ENCODE measurements at regions of chr12 and their contacts with region 1.

Region 1: DNA sequence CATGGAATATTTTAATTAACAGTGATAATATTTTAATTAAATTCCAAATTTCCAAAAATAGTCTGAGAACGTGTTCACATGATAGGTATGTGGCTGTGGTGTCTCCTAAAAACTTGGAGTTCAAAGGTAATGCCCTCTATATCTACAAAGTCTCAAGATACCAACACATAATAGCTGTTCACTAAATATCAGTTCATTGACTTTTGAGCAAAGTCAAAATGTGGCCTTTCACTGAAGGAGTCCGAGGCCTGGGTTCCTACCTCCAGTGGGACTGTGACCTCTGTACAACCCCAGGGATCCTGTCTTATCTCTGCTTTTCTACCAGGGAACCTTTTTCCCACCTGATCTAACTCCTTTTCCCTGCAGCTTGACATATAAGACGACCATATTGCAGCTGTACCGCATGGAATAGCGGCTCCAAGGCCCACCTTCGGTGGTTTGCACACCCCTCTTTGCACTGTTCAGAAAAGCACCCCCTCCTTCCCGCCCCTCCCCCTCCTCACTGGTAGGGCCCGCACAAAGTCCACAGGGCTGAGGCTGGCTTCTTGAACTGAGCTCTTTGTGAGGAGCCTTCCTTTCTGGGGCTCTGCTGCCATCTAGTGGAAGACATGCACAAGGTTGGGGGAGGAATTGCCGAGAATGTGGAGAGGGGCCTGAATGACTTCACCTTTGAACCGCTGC is 3.1 kb downstream of the CCND2 start:
- DNase-seq: peak; percentile 93
- ATAC-seq: peak; percentile 39
- H3K4me3 Mint-ChIP-seq: peak overlapping the region; percentile 95
- H3K27ac Mint-ChIP-seq: peak overlapping the region; percentile 99
- H3K4me1 Mint-ChIP-seq: peaks cover 62% of the 10 kb centered on the region
- H3K27me3 Mint-ChIP-seq: no peaks in the 10 kb centered on the region

Region 2: GRCh38 chr12:3885277-3886094 is 391.2 kb before region 1 on chr12:
- CTCF ChIA-PET with region 1: interaction called, 109 read pairs
- POLR2A ChIA-PET with region 1: interaction called, 12 read pairs
- intact Hi-C with region 1: loop called (anchors 1 kb)
- DNase-seq: peak; percentile 47
- ATAC-seq: peak; percentile 27
- H3K4me3 Mint-ChIP-seq: no peak overlapping the region
- H3K27ac Mint-ChIP-seq: peak overlapping the region; percentile 58
- H3K4me1 Mint-ChIP-seq: peaks cover 7% of the 10 kb centered on the region
- H3K27me3 Mint-ChIP-seq: no peaks in the 10 kb centered on the region

Region 3: DNA sequence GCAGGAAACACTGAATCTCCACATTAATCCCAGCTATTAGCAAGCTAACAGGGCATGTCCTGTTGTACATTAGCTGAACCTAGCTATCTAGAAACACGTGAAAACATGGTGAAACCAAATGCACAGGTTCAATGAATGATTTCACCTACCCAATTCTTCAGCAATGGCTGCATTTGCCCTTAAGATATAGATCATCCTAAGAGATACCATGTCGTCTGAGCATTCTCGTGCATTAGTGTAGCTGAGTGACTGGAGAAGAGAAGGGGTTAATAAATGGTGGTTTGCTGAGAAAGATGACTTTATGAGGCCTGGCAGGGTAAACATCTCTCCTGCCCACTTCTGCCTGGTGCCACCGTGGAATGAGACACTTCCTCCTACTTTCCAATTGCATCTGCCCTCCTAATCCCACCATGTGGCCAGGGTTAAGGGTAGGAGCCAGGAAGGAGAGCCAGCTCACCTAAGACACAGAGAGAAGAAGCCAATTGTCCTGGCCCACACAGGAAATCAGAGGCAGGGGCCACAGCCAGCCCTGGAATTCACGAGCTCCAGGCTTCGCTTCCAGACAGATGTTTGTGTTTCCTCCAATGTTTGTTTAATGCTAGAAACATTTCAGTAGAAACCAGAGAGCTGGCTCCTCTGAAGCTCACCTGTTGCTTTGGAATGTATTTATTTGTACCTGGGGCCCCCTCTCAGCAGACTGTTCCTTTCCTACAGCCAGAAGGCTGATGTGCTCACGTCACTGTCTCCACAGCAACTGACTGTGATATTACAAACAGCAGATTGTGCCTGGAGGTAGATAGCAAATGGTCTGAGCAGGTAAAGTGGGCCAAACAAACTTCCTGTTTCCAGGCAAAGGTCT is 277.5 kb before region 1 on chr12:
- CTCF ChIA-PET with region 1: interaction called, 37 read pairs
- POLR2A ChIA-PET with region 1: interaction called, 3 read pairs
- intact Hi-C with region 1: loop called (anchors 1 kb)
- DNase-seq: no peak
- ATAC-seq: no peak
- H3K4me3 Mint-ChIP-seq: no peak overlapping the region
- H3K27ac Mint-ChIP-seq: no peak overlapping the region
- H3K4me1 Mint-ChIP-seq: peaks cover 16% of the 10 kb centered on the region
- H3K27me3 Mint-ChIP-seq: no peaks in the 10 kb centered on the region

Region 4: GRCh38 chr12:4112734-4113325 is 163.8 kb before region 1 on chr12:
- CTCF ChIA-PET with region 1: interaction called, 51 read pairs
- POLR2A ChIA-PET with region 1: interaction called, 11 read pairs
- intact Hi-C with region 1: loop called in 1 of 2 experiments (anchors 2 kb)
- DNase-seq: no peak
- ATAC-seq: peak; percentile 35
- H3K4me3 Mint-ChIP-seq: no peak overlapping the region
- H3K27ac Mint-ChIP-seq: no peak overlapping the region
- H3K4me1 Mint-ChIP-seq: peaks cover 59% of the 10 kb centered on the region
- H3K27me3 Mint-ChIP-seq: peaks cover 11% of the 10 kb centered on the region

Region 5: GRCh38 chr12:4164559-4165558 is 111.8 kb before region 1 on chr12:
- CTCF ChIA-PET with region 1: interaction called, 14 read pairs
- POLR2A ChIA-PET with region 1: interaction called, 7 read pairs
- intact Hi-C with region 1: no loop called
- DNase-seq: peak; percentile 82
- ATAC-seq: peak; percentile 85
- H3K4me3 Mint-ChIP-seq: peak overlapping the region; percentile 75
- H3K27ac Mint-ChIP-seq: peak overlapping the region; percentile 88
- H3K4me1 Mint-ChIP-seq: peaks cover 50% of the 10 kb centered on the region
- H3K27me3 Mint-ChIP-seq: no peaks in the 10 kb centered on the region

Region 6: GRCh38 chr12:4287325-4288211 is 10.9 kb after region 1 on chr12:
- CTCF ChIA-PET with region 1: interaction called, 15 read pairs
- POLR2A ChIA-PET with region 1: interaction called, 6 read pairs
- intact Hi-C with region 1: no loop called
- DNase-seq: no peak
- ATAC-seq: peak; percentile 73
- H3K4me3 Mint-ChIP-seq: peak overlapping the region; percentile 30
- H3K27ac Mint-ChIP-seq: peak overlapping the region; percentile 79
- H3K4me1 Mint-ChIP-seq: peaks cover 96% of the 10 kb centered on the region
- H3K27me3 Mint-ChIP-seq: no peaks in the 10 kb centered on the region

Region 7: DNA sequence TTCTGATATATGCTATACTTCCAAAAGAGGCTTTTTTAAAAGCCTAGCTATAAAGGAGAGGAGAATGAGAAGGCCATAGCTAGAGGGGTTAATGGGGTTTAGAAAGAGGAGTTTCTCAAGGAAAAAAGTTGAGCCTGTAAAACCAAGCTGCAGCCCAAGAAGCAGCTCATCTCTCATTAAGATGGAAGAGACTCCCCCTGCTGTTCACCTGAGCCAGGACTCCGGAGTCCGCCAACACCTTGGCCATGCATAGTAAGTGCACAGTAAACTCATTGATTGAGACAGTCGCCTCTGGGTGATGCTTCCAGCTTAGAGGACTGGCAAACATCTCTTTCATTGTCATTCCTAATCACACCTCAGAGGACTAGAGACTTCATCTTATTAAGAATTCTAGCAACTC is 1622.2 kb after region 1 on chr12:
- CTCF ChIA-PET with region 1: no interaction called
- POLR2A ChIA-PET with region 1: no interaction called
- intact Hi-C with region 1: no loop called
- DNase-seq: no peak
- ATAC-seq: no peak
- H3K4me3 Mint-ChIP-seq: no peak overlapping the region
- H3K27ac Mint-ChIP-seq: no peak overlapping the region
- H3K4me1 Mint-ChIP-seq: no peaks in the 10 kb centered on the region
- H3K27me3 Mint-ChIP-seq: peaks cover 34% of the 10 kb centered on the region

Measured in activated CD4-positive, alpha-beta T cell treated with anti-CD3 and anti-CD28 coated beads for 36 hours (primary cell).